CD4-positive, alpha-beta T cell (primary cell): ENCODE measurements at regions of chr1 and their contacts with region 1.

Region 1: GRCh38 chr1:43650310-43651085 is 549 bp downstream of the KDM4A start:
- DNase-seq: peak in 13 of 14 experiments; percentile 78 to 96 (median 86)
- ATAC-seq: peak; percentile 71
- H3K4me3 ChIP-seq: peak overlapping the region; percentile 91
- H3K4me3 Mint-ChIP-seq: peak overlapping the region; percentile 98
- H3K27ac ChIP-seq: peak overlapping the region; percentile 75 to 79
- H3K27ac Mint-ChIP-seq: peak overlapping the region; percentile 90
- H3K4me1 ChIP-seq: peaks cover 32% of the 10 kb centered on the region
- H3K4me1 Mint-ChIP-seq: peaks cover 41% of the 10 kb centered on the region
- H3K27me3 ChIP-seq: no peaks in the 10 kb centered on the region
- H3K27me3 Mint-ChIP-seq: no peaks in the 10 kb centered on the region
- CTCF ChIP-seq: no peak

Region 2: DNA sequence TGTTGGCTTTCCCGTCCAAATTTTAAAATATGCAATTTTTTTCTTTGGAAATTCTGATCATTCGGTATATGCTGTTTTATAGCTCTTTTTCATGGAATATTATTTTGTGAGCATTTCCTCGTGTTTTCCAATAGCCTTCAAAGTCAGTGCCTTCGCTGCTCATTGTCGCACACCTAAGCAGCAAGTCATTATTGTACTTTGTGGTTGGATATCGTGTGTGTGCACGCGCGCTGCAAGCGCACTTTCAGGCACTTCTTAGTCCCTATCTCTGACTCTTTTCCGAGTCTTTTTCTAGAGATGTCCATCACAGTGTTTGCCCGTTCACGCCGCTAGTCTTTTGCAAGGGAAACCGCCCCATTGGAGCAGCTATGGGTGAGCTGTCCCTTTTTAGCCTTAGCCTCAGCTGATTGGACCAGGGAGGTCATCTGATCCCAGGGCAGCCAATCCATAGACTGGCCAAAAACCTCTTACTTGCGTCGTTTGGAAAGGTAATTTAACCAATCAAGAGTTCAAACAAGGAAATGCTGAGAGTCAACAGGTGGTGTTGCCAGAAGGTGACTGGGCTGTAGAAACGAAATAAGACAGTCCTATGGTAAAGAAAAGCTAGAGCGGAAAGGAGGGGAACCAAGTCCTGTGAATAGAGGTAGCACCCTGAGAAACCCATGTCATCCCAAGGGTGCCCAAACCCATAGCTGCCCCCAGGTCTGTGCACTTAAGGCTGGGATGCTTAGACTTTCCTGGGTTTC is 196.1 kb before region 1 on chr1:
- CTCF ChIA-PET with region 1: no interaction called
- POLR2A ChIA-PET with region 1: interaction called, 15 read pairs
- intact Hi-C with region 1: no loop called
- DNase-seq: peak in 13 of 14 experiments; percentile 23 to 84 (median 44)
- ATAC-seq: peak; percentile 75
- H3K4me3 ChIP-seq: peak overlapping the region; percentile 65
- H3K4me3 Mint-ChIP-seq: peak overlapping the region; percentile 88
- H3K27ac ChIP-seq: no peak overlapping the region
- H3K27ac Mint-ChIP-seq: peak overlapping the region; percentile 85
- H3K4me1 ChIP-seq: peaks cover 18% of the 10 kb centered on the region
- H3K4me1 Mint-ChIP-seq: peaks cover 20% of the 10 kb centered on the region
- H3K27me3 ChIP-seq: peaks cover 0 to 6% of the 10 kb centered on the region in 2 experiments
- H3K27me3 Mint-ChIP-seq: peaks cover 12% of the 10 kb centered on the region
- CTCF ChIP-seq: no peak

Region 3: GRCh38 chr1:43565600-43566360 is 84.7 kb before region 1 on chr1:
- CTCF ChIA-PET with region 1: no interaction called
- POLR2A ChIA-PET with region 1: no interaction called
- intact Hi-C with region 1: no loop called
- DNase-seq: peak in 10 of 14 experiments; percentile 10 to 44 (median 29)
- ATAC-seq: peak; percentile 77
- H3K4me3 ChIP-seq: peak overlapping the region; percentile 54
- H3K4me3 Mint-ChIP-seq: peak overlapping the region; percentile 56
- H3K27ac ChIP-seq: no peak overlapping the region
- H3K27ac Mint-ChIP-seq: no peak overlapping the region
- H3K4me1 ChIP-seq: peaks cover 15% of the 10 kb centered on the region
- H3K4me1 Mint-ChIP-seq: no peaks in the 10 kb centered on the region
- H3K27me3 ChIP-seq: peaks cover 0 to 2% of the 10 kb centered on the region in 2 experiments
- H3K27me3 Mint-ChIP-seq: peaks cover 15% of the 10 kb centered on the region
- CTCF ChIP-seq: no peak

Region 4: GRCh38 chr1:43634721-43635120 is 15.8 kb before region 1 on chr1:
- CTCF ChIA-PET with region 1: no interaction called
- POLR2A ChIA-PET with region 1: interaction called, 12 read pairs
- intact Hi-C with region 1: no loop called
- DNase-seq: no peak
- ATAC-seq: no peak
- H3K4me3 ChIP-seq: no peak overlapping the region
- H3K4me3 Mint-ChIP-seq: no peak overlapping the region
- H3K27ac ChIP-seq: no peak overlapping the region
- H3K27ac Mint-ChIP-seq: no peak overlapping the region
- H3K4me1 ChIP-seq: no peaks in the 10 kb centered on the region
- H3K4me1 Mint-ChIP-seq: no peaks in the 10 kb centered on the region
- H3K27me3 ChIP-seq: peaks cover 0 to 4% of the 10 kb centered on the region in 2 experiments
- H3K27me3 Mint-ChIP-seq: peaks cover 4% of the 10 kb centered on the region
- CTCF ChIP-seq: no peak

Region 5: DNA sequence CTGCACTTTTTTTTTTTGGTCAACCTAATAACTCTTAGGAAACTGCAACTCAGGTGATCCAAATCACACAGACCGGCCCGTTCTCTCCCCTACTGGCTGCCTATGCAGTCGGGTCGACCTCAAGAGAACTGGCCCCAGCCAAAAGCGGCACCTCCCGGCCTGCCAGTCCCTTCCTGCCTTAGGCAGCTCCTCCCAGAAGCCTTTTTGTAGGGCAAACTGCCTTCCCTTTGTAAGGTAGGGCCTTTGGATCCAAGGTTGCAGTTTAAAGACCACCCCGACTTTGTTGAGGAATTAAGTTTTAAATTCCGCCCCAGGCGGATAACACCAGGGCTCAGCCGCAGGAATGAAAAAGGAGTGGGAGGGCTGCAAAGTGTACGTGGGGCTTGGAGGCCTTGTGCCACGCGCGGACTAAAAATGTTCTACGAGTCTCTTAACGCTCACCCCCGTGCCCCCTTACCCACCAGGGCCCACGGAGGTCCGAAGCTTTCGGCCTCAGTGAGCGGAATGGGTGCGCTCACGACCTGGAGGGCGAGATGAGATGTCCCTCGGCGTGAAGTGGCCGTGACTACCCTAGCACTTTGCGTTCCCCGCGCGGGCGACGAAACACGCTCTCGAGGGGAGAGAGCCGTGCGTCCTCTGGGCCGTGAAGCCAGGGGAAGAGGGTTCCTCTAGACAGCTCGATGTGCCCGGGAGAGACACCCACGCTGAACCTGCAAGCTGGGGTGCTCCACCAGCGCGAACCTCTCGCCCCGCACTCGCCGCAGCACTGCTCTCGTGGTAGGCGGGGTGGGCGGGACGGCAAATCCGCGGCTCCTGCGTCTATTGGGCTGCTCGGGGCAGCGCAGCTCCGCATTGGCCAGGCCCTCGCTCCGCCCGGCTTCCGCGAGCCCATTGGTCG is 56.3 kb after region 1 on chr1:
- CTCF ChIA-PET with region 1: interaction called, 6 read pairs
- POLR2A ChIA-PET with region 1: interaction called, 33 read pairs
- intact Hi-C with region 1: loop called in 1 of 2 experiments (anchors 1 kb)
- DNase-seq: peak; percentile 82 to 95 (median 88)
- ATAC-seq: peak; percentile 99
- H3K4me3 ChIP-seq: peak overlapping the region; percentile 82
- H3K4me3 Mint-ChIP-seq: peak overlapping the region; percentile 91
- H3K27ac ChIP-seq: peak overlapping the region in 1 of 2 donors; percentile 43
- H3K27ac Mint-ChIP-seq: peak overlapping the region; percentile 73
- H3K4me1 ChIP-seq: peaks cover 19% of the 10 kb centered on the region
- H3K4me1 Mint-ChIP-seq: peaks cover 28% of the 10 kb centered on the region
- H3K27me3 ChIP-seq: no peaks in the 10 kb centered on the region
- H3K27me3 Mint-ChIP-seq: no peaks in the 10 kb centered on the region
- CTCF ChIP-seq: no peak

Region 6: DNA sequence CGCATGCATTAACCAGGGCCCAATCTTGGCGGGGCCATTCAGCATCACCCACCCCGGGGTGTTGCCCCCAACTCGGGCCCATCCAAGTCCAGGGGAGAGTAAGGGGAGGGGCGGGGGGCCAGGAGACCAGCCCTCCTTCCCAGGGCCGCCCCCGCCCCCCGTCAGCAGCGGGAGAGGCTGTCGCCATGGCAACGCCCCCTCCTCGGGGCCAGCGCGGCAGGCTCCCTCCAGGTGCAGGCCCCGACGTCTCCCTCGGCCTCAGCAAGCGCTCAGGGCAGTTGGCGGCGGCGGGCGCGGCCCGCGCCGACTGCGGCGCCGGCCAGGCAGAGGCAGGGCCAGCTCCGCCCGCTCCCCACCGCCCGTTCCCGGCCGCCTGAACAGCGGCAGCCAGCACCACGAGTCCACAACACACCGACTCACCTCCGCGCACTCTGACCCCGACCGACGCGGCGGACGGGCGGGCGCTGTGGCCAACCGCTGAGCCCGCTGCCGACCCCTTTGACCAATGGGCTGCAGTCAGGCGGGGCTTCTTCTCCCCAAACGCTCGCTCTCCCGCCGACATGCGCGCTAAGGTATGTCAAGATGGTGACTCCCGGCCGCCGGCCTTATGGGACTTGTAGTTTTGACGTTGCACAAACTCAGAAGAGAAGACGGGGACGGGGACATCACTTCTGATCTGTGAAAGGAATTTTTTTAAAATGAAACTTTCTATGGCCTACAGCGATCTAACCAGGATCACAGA is 704.5 kb after region 1 on chr1 and contains the start of gene ERI3:
- CTCF ChIA-PET with region 1: no interaction called
- POLR2A ChIA-PET with region 1: no interaction called
- intact Hi-C with region 1: loop called in 1 of 2 experiments (anchors 10 kb)
- DNase-seq: peak; percentile 93 to 98 (median 95)
- ATAC-seq: peak; percentile 100
- H3K4me3 ChIP-seq: peak within 1 kb of the TSS; percentile 80
- H3K4me3 Mint-ChIP-seq: peak within 1 kb of the TSS; percentile 94
- H3K27ac ChIP-seq: peak within 1 kb of the TSS in 1 of 2 donors; percentile 29
- H3K27ac Mint-ChIP-seq: peak within 1 kb of the TSS; percentile 63
- H3K4me1 ChIP-seq: peaks cover 19% of the 10 kb centered on the region
- H3K4me1 Mint-ChIP-seq: peaks cover 45% of the 10 kb centered on the region
- H3K27me3 ChIP-seq: no peaks in the 10 kb centered on the region
- H3K27me3 Mint-ChIP-seq: no peaks in the 10 kb centered on the region
- CTCF ChIP-seq: no peak
- total RNA-seq, gene ERI3: 19.7 to 20.7 TPM